Sigmoid colon (tissue), 7 donors: ENCODE measurements at regions of chr18 and their contacts with region 1.

Region 1: GRCh38 chr18:32092422-32093101 is 888 bp downstream of the RNF138 start:
- DNase-seq: peak; percentile 100
- H3K4me3 ChIP-seq: peak overlapping the region; percentile 69 to 95 (median 78)
- H3K27ac ChIP-seq: peak overlapping the region; percentile 94 to 100 (median 100)
- H3K4me1 ChIP-seq: peaks cover 0 to 37% (median 21%) of the 10 kb centered on the region in 4 donors
- H3K27me3 ChIP-seq: no peaks in the 10 kb centered on the region
- CTCF ChIP-seq: no peak
- EP300 ChIP-seq: peak in 1 of 4 donors; percentile 37
- POLR2A ChIP-seq: peak; percentile 33 to 54

Region 2: GRCh38 chr18:31942999-31943865 is 149.3 kb before region 1 on chr18 and contains the start of gene TRAPPC8:
- intact Hi-C with region 1: loop called (anchors 2 kb)
- DNase-seq: peak; percentile 99
- H3K4me3 ChIP-seq: peak within 1 kb of the TSS; percentile 71 to 99 (median 73)
- H3K27ac ChIP-seq: peak within 1 kb of the TSS; percentile 84 to 98 (median 90)
- H3K4me1 ChIP-seq: peaks cover 0 to 46% (median 37%) of the 10 kb centered on the region in 4 donors
- H3K27me3 ChIP-seq: no peaks in the 10 kb centered on the region
- CTCF ChIP-seq: no peak
- EP300 ChIP-seq: peak in 1 of 4 donors; percentile 47
- POLR2A ChIP-seq: no peak
- total RNA-seq, gene TRAPPC8: 33.8 to 50.4 (median 41.5) TPM

Region 3: GRCh38 chr18:32289483-32290075 is 197.0 kb after region 1 on chr18:
- intact Hi-C with region 1: loop called (anchors 10 kb)
- DNase-seq: no peak
- H3K4me3 ChIP-seq: no peak overlapping the region
- H3K27ac ChIP-seq: no peak overlapping the region
- H3K4me1 ChIP-seq: no peaks in the 10 kb centered on the region
- H3K27me3 ChIP-seq: no peaks in the 10 kb centered on the region
- CTCF ChIP-seq: peak in 3 of 4 experiments; percentile 38 to 66 (median 55)
- EP300 ChIP-seq: no peak
- POLR2A ChIP-seq: no peak

Region 4: GRCh38 chr18:32405588-32405987 is 313.0 kb after region 1 on chr18:
- intact Hi-C with region 1: no loop called
- DNase-seq: no peak
- H3K4me3 ChIP-seq: no peak overlapping the region
- H3K27ac ChIP-seq: no peak overlapping the region
- H3K4me1 ChIP-seq: peaks cover 0 to 16% (median 9%) of the 10 kb centered on the region in 4 donors
- H3K27me3 ChIP-seq: no peaks in the 10 kb centered on the region
- CTCF ChIP-seq: no peak
- EP300 ChIP-seq: no peak
- POLR2A ChIP-seq: no peak

Region 5: DNA sequence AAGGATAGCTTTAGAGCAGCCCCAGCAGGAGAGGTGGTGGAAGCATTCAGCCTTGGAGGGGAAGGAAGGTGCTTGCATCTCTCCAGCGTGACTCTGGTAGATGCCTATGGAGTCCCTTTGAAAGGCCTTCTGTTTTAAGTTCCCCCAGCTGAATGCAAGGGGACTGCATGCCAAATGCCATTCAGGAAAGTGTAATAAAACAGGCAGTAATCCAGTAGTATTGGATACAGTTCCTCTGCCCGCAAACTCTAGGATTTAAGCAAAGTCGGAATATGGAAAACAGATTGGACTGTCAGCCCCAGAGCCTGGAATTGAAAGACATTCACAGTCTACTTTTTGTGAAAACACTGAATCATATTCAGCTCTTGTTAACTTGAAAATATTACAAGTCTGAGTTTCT is 503.3 kb after region 1 on chr18:
- intact Hi-C with region 1: no loop called
- DNase-seq: no peak
- H3K4me3 ChIP-seq: no peak overlapping the region
- H3K27ac ChIP-seq: no peak overlapping the region
- H3K4me1 ChIP-seq: no peaks in the 10 kb centered on the region
- H3K27me3 ChIP-seq: no peaks in the 10 kb centered on the region
- CTCF ChIP-seq: no peak
- EP300 ChIP-seq: no peak
- POLR2A ChIP-seq: no peak